Endothelial cell of umbilical vein (primary cell): ENCODE measurements at regions of chr11 and their contacts with region 1.

Region 1: GRCh38 chr11:57751676-57752253 is at the start of gene BTBD18:
- DNase-seq: peak; percentile 60
- H3K4me3 ChIP-seq: no peak within 1 kb of the TSS
- H3K27ac ChIP-seq: no peak within 1 kb of the TSS
- H3K4me1 ChIP-seq: no peaks in the 10 kb centered on the region
- H3K27me3 ChIP-seq: no peaks in the 10 kb centered on the region
- CTCF ChIP-seq: peak; percentile 46 to 49
- POLR2A ChIP-seq: no peak
- total RNA-seq, gene BTBD18: not detected in 2 replicates

Region 2: GRCh38 chr11:57792060-57792541 is 40.3 kb after region 1 on chr11:
- CTCF ChIA-PET with region 1: interaction called, 10 read pairs
- POLR2A ChIA-PET with region 1: no interaction called
- dilution Hi-C with region 1: no loop called
- intact Hi-C with region 1: no loop called
- DNase-seq: peak; percentile 46
- H3K4me3 ChIP-seq: no peak overlapping the region
- H3K27ac ChIP-seq: peak overlapping the region; percentile 55
- H3K4me1 ChIP-seq: peaks cover 33% of the 10 kb centered on the region
- H3K27me3 ChIP-seq: no peaks in the 10 kb centered on the region
- CTCF ChIP-seq: no peak
- POLR2A ChIP-seq: no peak

Region 3: GRCh38 chr11:58513747-58514367 is 762.1 kb after region 1 on chr11:
- CTCF ChIA-PET with region 1: interaction called, 19 read pairs
- POLR2A ChIA-PET with region 1: no interaction called
- dilution Hi-C with region 1: no loop called
- intact Hi-C with region 1: loop called (anchors 1 kb)
- DNase-seq: peak; percentile 73
- H3K4me3 ChIP-seq: no peak overlapping the region
- H3K27ac ChIP-seq: no peak overlapping the region
- H3K4me1 ChIP-seq: no peaks in the 10 kb centered on the region
- H3K27me3 ChIP-seq: peaks cover 18 to 32% of the 10 kb centered on the region in 2 experiments
- CTCF ChIP-seq: peak; percentile 57 to 68
- POLR2A ChIP-seq: no peak